Activated CD4-positive, alpha-beta memory T cell treated with anti-CD3 and anti-CD28 coated beads, Interleukin-2, amount 10 ng/mL, durations not matched to agents 7 days and 5 days (primary cell): ENCODE measurements at regions of chr10 and their contacts with region 1.

Region 1: DNA sequence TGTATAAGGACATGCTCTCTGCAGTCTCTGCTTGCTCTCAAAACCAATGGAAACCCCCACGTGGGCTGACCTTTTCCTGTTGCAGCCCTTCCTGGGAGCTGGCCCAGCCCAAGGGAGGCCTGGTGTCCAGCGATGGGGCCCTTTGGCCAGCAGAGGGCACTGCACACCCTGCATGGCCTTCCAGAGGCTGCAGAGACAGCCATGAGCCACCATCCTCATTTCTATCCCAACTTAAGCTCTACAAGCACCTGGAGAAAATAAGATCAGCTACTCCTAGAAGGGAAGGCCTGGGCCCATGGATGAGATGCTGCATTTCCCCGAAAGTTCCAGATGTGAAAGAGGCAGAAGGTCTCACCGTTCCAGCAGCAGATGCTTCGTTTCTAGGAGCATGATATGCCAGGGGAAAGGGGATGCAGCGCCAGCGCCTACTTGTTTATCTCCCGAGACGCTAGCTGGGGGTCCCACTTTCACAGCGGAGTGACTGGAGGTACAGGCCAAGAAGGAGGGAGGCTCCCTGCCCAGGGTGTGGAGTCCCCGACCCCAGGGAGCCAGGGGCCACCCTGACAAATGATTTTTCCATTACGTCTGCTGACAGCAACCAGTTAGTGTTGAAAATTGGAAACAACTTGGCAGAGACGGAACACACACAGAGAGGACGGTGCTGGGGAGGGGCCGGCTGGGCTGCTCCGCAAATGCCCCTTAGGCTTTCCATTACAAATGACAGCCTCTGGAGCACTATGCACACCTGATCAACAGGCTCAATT is 106.4 kb downstream of the ZRANB1 start:
- DNase-seq: peak; percentile 65
- H3K4me3 Mint-ChIP-seq: no peak overlapping the region
- H3K27ac Mint-ChIP-seq: no peak overlapping the region
- H3K4me1 Mint-ChIP-seq: no peaks in the 10 kb centered on the region
- H3K27me3 Mint-ChIP-seq: peaks cover 8% of the 10 kb centered on the region

Region 2: DNA sequence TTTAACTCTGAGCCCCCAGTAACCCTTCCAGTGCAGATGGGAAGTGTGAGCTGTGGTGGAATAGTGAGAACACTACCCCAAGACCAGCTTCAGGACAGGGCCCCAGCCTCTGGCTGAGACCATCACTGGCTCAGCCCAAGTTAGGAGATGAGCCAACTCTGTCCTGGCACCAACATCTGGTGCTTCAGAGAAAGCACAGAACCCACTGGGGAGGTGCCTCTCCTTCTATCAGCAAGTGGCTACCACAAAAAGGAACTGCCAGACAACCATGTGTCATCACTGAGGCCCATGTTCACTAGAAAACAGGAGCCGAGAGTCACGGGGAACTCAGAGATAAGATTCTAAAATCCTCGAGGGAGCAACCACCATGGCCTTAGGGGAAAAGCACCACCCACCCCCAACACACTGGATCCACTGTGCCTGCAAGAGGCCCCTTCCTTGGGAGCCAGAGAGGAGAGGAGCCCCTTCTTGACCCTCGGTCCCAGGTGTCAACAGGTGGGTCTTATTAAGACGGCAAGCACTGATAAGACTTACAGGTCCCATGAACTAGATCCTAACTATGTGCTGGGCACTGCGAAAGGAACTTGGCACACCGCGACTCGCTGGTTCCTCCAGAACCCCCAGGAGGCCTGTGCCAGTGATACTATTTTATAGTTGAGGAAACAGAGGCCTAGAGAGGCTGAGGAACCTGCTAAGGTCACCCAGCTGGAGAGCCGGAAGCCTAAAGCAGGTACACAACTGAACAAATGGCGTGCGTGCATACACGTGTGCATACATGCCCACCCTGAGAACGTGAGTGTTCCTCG is 406.8 kb before region 1 on chr10:
- CTCF ChIA-PET with region 1: no interaction called
- POLR2A ChIA-PET with region 1: no interaction called
- DNase-seq: peak; percentile 59
- H3K4me3 Mint-ChIP-seq: peak overlapping the region; percentile 54
- H3K27ac Mint-ChIP-seq: peak overlapping the region; percentile 94
- H3K4me1 Mint-ChIP-seq: peaks cover 83% of the 10 kb centered on the region
- H3K27me3 Mint-ChIP-seq: no peaks in the 10 kb centered on the region

Region 3: DNA sequence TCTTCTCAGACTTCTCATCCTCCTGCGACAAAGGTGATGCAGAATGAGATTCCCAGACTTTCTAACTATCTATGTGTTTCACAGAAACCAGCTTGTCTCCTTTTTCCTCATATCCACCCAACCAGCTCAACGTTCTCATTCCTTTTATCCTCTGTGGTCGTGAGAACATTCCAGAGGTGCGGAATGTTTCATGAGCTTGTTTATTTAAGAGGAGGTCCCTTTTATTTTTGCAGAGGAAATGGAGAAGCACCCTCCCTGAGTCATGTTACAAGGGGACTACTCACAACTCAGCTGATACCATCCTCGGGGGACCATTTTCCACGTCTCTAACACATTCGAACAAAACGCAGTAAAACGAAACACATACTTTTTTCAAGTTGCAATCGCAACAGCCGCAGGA is 13.1 kb before region 1 on chr10:
- CTCF ChIA-PET with region 1: interaction called, 10 read pairs
- POLR2A ChIA-PET with region 1: no interaction called
- DNase-seq: no peak
- H3K4me3 Mint-ChIP-seq: no peak overlapping the region
- H3K27ac Mint-ChIP-seq: no peak overlapping the region
- H3K4me1 Mint-ChIP-seq: no peaks in the 10 kb centered on the region
- H3K27me3 Mint-ChIP-seq: peaks cover 13% of the 10 kb centered on the region